Aorta (tissue), 5 donors: ENCODE measurements at regions of chr4 and their contacts with region 1.

Region 1: GRCh38 chr4:47531241-47531953 is 46.3 kb downstream of the ATP10D start:
- DNase-seq: peak in 1 of 2 donors; percentile 61
- ATAC-seq: peak; percentile 63
- H3K4me3 ChIP-seq: no peak overlapping the region
- H3K27ac ChIP-seq: peak overlapping the region; percentile 43 to 61
- H3K4me1 ChIP-seq: peaks cover 6 to 10% of the 10 kb centered on the region in 2 donors
- H3K27me3 ChIP-seq: no peaks in the 10 kb centered on the region

Region 2: GRCh38 chr4:47315346-47315745 is 216.1 kb before region 1 on chr4:
- intact Hi-C with region 1: no loop called
- DNase-seq: no peak
- ATAC-seq: no peak
- H3K4me3 ChIP-seq: no peak overlapping the region
- H3K27ac ChIP-seq: no peak overlapping the region
- H3K4me1 ChIP-seq: no peaks in the 10 kb centered on the region
- H3K27me3 ChIP-seq: no peaks in the 10 kb centered on the region

Region 3: GRCh38 chr4:47463235-47463956 is 68.0 kb before region 1 on chr4 and contains the start of gene COMMD8:
- intact Hi-C with region 1: loop called in 1 of 2 experiments (anchors 5 kb)
- DNase-seq: peak; percentile 98 to 99
- ATAC-seq: peak; percentile 100
- H3K4me3 ChIP-seq: peak within 1 kb of the TSS; percentile 39 to 78
- H3K27ac ChIP-seq: peak within 1 kb of the TSS; percentile 8 to 48
- H3K4me1 ChIP-seq: no peaks in the 10 kb centered on the region
- H3K27me3 ChIP-seq: no peaks in the 10 kb centered on the region
- total RNA-seq, gene COMMD8: 10.0 to 11.7 TPM

Region 4: GRCh38 chr4:47499700-47500099 is 31.7 kb before region 1 on chr4:
- intact Hi-C with region 1: loop called in 1 of 2 experiments (anchors 5 kb)
- DNase-seq: no peak
- ATAC-seq: no peak
- H3K4me3 ChIP-seq: no peak overlapping the region
- H3K27ac ChIP-seq: peak overlapping the region in 1 of 2 donors; percentile 82
- H3K4me1 ChIP-seq: peaks cover 2 to 14% of the 10 kb centered on the region in 2 donors
- H3K27me3 ChIP-seq: no peaks in the 10 kb centered on the region

Region 5: GRCh38 chr4:47762376-47763266 is 231.2 kb after region 1 on chr4:
- intact Hi-C with region 1: no loop called
- DNase-seq: no peak
- ATAC-seq: no peak
- H3K4me3 ChIP-seq: no peak overlapping the region
- H3K27ac ChIP-seq: no peak overlapping the region
- H3K4me1 ChIP-seq: no peaks in the 10 kb centered on the region
- H3K27me3 ChIP-seq: no peaks in the 10 kb centered on the region